ENCODE measurements at regions of chr2 and their contacts with region 1.

Region 1: DNA sequence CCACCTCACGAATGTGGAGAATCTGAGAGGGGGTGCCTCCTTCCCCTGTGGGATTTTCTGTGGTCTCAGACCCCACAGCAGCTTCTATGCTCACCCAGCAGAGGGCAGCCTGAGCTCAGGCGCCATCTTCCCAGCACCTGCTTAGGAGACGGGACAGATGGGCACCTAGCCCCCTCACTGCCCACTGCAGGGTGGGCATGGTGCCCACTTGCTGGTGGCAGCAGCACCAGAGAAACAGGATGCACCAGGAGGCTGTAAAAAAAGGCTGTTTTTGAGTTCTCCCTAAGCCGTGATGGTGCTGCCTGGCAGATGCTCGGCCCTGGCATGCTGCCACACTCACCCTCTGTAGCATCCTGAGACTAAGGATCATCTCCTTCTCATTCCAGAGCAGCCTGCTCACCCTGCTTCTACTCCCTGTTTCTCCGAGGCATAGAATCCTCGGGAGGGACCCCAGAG is 19.1 kb upstream of the SLC20A1 start:
- DNase-seq: peak; percentile 36 to 87 (median 65)
- ATAC-seq: peak; percentile 43
- H3K4me3 ChIP-seq: peak overlapping the region; percentile 23 to 52
- H3K4me3 Mint-ChIP-seq: peak overlapping the region; percentile 68
- H3K27ac ChIP-seq: peak overlapping the region; percentile 3 to 41
- H3K27ac Mint-ChIP-seq: peak overlapping the region; percentile 83
- H3K4me1 ChIP-seq: peaks cover 64% of the 10 kb centered on the region
- H3K4me1 Mint-ChIP-seq: peaks cover 54% of the 10 kb centered on the region
- H3K27me3 ChIP-seq: no peaks in the 10 kb centered on the region
- H3K27me3 Mint-ChIP-seq: no peaks in the 10 kb centered on the region
- CTCF ChIP-seq: peak; percentile 83

Region 2: GRCh38 chr2:112606488-112606902 is 20.1 kb before region 1 on chr2:
- CTCF ChIA-PET with region 1: interaction called, 6 read pairs
- POLR2A ChIA-PET with region 1: no interaction called
- intact Hi-C with region 1: loop called in 1 of 2 experiments (anchors 2 kb)
- DNase-seq: no peak
- ATAC-seq: no peak
- H3K4me3 ChIP-seq: no peak overlapping the region
- H3K4me3 Mint-ChIP-seq: no peak overlapping the region
- H3K27ac ChIP-seq: no peak overlapping the region
- H3K27ac Mint-ChIP-seq: no peak overlapping the region
- H3K4me1 ChIP-seq: no peaks in the 10 kb centered on the region
- H3K4me1 Mint-ChIP-seq: no peaks in the 10 kb centered on the region
- H3K27me3 ChIP-seq: no peaks in the 10 kb centered on the region
- H3K27me3 Mint-ChIP-seq: no peaks in the 10 kb centered on the region
- CTCF ChIP-seq: no peak

Region 3: DNA sequence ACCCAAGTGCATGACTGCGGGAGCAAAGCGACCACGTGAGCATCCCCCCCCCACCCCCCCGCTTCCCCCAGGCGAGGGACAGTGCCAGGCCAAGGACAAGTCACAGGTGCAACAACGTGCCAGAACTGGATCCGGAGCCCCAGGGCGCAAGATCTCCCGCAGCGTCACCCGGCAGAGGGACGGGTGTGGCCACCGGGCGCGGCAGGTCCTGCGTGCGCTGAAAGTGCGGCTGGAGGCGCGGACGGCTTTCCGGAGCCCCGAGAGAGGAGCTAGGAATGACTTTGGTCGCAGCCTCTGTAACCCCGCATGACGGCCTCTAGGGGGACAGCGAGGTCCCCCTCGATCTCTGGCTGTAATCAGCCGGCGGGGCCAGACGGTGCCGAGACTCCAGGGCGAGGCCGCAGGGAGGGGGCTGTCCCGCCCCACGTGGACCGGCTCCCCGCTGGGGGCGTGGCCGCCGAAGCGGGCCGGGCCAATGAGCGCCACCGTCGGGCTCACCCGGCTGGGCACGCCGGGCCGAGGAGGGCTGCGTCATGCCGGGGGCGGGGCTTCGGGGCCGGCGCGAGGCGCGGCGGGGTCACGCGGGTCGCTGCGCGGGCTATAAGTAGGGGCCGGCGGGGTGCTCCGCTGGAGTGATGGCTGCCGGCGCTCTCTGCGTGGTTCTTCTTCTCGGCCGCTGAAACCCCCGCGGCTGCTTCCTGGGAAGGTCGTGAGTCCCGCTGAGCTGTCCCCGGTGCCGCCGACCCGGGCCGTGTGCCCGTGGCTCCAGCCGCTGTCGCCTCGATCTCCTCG is 18.9 kb after region 1 on chr2 and contains the start of gene SLC20A1:
- CTCF ChIA-PET with region 1: interaction called, 180 read pairs
- POLR2A ChIA-PET with region 1: interaction called, 183 read pairs
- intact Hi-C with region 1: loop called (anchors 1 kb)
- DNase-seq: peak; percentile 96 to 100 (median 98)
- ATAC-seq: peak; percentile 91
- H3K4me3 ChIP-seq: peak within 1 kb of the TSS; percentile 84 to 90
- H3K4me3 Mint-ChIP-seq: peak within 1 kb of the TSS; percentile 85
- H3K27ac ChIP-seq: peak within 1 kb of the TSS; percentile 91
- H3K27ac Mint-ChIP-seq: peak within 1 kb of the TSS; percentile 89
- H3K4me1 ChIP-seq: peaks cover 50% of the 10 kb centered on the region
- H3K4me1 Mint-ChIP-seq: peaks cover 56% of the 10 kb centered on the region
- H3K27me3 ChIP-seq: no peaks in the 10 kb centered on the region
- H3K27me3 Mint-ChIP-seq: no peaks in the 10 kb centered on the region
- CTCF ChIP-seq: peak; percentile 55
- total RNA-seq, gene SLC20A1: 144 to 145 TPM

Region 4: GRCh38 chr2:112661656-112662305 is 35.1 kb after region 1 on chr2:
- CTCF ChIA-PET with region 1: interaction called, 6 read pairs
- POLR2A ChIA-PET with region 1: interaction called, 3 read pairs
- intact Hi-C with region 1: loop called in 1 of 2 experiments (anchors 5 kb)
- DNase-seq: no peak
- ATAC-seq: no peak
- H3K4me3 ChIP-seq: no peak overlapping the region
- H3K4me3 Mint-ChIP-seq: no peak overlapping the region
- H3K27ac ChIP-seq: no peak overlapping the region
- H3K27ac Mint-ChIP-seq: no peak overlapping the region
- H3K4me1 ChIP-seq: peaks cover 14% of the 10 kb centered on the region
- H3K4me1 Mint-ChIP-seq: peaks cover 55% of the 10 kb centered on the region
- H3K27me3 ChIP-seq: no peaks in the 10 kb centered on the region
- H3K27me3 Mint-ChIP-seq: no peaks in the 10 kb centered on the region
- CTCF ChIP-seq: no peak

Region 5: GRCh38 chr2:112692496-112692911 is 65.9 kb after region 1 on chr2:
- CTCF ChIA-PET with region 1: interaction called, 338 read pairs
- POLR2A ChIA-PET with region 1: interaction called, 9 read pairs
- intact Hi-C with region 1: loop called (anchors 1 kb)
- DNase-seq: peak in 8 of 9 experiments; percentile 20 to 74 (median 51)
- ATAC-seq: peak; percentile 64
- H3K4me3 ChIP-seq: no peak overlapping the region
- H3K4me3 Mint-ChIP-seq: no peak overlapping the region
- H3K27ac ChIP-seq: peak overlapping the region in 1 of 2 experiments; percentile 73
- H3K27ac Mint-ChIP-seq: peak overlapping the region; percentile 60
- H3K4me1 ChIP-seq: peaks cover 17% of the 10 kb centered on the region
- H3K4me1 Mint-ChIP-seq: peaks cover 24% of the 10 kb centered on the region
- H3K27me3 ChIP-seq: no peaks in the 10 kb centered on the region
- H3K27me3 Mint-ChIP-seq: no peaks in the 10 kb centered on the region
- CTCF ChIP-seq: no peak

Measured in CD8-positive, alpha-beta T cell (primary cell).